ENCODE measurements at regions of chr11 and their contacts with region 1.

Region 1: DNA sequence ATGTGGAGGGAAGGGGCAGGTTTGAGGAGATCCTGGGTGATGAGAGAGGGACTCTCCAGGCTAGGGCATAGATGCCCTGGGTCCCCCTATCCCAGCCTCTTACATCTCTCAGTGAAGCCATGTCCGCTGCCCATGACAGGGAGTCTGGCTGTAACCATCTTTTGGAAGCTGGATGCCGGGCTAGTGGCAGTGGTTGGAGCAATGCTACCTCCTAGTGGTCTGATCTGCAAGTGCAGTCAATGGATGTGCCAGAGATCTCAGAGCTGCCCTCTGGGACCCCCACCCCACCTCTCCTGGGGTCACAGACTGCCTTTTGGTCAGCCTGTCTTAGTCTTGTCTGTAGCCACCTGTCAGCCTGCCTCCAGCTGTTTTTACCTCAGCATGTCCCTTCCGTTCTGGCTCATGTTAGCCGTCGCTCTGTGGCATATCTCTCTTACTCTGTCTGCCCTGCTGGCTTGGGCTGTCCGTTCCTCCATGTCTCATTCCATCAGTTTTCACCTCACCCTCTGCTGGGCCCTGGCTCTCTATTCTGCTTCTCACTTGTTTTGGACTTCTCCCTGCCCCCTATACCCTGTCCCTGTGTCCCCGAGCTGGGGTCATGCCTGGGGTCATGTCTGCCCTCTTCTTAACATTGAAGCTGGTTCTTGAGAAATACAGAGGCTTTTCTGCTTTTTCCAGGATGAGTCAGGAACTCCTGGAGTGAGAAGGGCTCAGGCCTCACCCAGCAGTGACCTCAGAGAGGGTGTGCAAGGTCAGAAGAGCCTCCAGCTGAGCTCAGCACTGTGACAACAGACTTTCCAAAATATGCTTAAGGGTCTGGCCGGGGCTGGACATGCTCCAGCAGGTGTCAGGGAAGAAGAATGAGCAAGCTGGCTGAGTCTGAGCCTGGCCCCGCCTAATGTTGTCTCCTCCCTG is 52.0 kb upstream of the THY1 start:
- DNase-seq: peak; percentile 72 to 94 (median 89)
- H3K4me3 ChIP-seq: no peak overlapping the region
- H3K27ac ChIP-seq: peak overlapping the region; percentile 42 to 88 (median 68)
- H3K4me1 ChIP-seq: peaks cover 5 to 8% of the 10 kb centered on the region in 2 donors
- H3K27me3 ChIP-seq: no peaks in the 10 kb centered on the region
- CTCF ChIP-seq: peak; percentile 89 to 97 (median 92)
- POLR2A ChIP-seq: no peak

Region 2: DNA sequence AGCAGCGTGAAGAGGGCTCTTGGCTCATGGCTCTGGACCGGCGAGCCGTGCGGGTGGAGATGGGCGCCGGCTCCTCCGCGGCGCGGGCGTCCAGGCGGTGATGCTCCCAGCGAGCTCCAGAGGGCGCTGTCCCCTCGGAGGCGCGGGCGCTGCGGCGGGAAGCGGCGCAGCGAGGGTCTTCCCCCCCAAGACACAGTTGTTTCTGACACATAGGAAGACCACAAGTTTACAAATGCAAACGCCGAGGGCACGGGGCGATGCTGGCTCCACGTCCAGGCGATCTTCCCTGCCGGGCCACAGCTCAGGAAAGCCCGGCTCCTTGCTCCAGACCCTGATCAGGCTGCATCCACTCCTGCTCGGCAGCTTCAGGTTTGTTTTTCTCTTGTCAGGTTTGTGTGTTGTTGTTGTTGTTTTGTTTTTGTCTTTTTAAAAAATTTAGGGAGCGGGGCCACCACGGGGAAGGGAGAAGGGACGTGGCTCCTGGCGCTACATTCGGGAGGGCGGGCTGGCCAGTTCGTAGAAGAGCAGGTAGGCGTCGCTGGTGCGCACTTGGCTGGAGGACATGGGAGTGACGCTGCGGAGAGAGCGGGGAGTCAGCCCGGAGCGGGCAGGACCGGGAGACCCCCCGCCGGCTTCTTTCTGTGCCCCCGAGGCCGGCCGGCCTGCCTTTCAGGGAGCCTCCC is 118.4 kb before region 1 on chr11:
- intact Hi-C with region 1: loop called (anchors 5 to 10 kb)
- DNase-seq: peak; percentile 77 to 91 (median 88)
- H3K4me3 ChIP-seq: peak overlapping the region in 2 of 4 donors; percentile 44 to 56
- H3K27ac ChIP-seq: peak overlapping the region in 3 of 5 donors; percentile 59 to 72 (median 70)
- H3K4me1 ChIP-seq: peaks cover 8 to 9% of the 10 kb centered on the region in 2 donors
- H3K27me3 ChIP-seq: no peaks in the 10 kb centered on the region
- CTCF ChIP-seq: peak; percentile 80 to 97 (median 95)
- POLR2A ChIP-seq: no peak

Region 3: DNA sequence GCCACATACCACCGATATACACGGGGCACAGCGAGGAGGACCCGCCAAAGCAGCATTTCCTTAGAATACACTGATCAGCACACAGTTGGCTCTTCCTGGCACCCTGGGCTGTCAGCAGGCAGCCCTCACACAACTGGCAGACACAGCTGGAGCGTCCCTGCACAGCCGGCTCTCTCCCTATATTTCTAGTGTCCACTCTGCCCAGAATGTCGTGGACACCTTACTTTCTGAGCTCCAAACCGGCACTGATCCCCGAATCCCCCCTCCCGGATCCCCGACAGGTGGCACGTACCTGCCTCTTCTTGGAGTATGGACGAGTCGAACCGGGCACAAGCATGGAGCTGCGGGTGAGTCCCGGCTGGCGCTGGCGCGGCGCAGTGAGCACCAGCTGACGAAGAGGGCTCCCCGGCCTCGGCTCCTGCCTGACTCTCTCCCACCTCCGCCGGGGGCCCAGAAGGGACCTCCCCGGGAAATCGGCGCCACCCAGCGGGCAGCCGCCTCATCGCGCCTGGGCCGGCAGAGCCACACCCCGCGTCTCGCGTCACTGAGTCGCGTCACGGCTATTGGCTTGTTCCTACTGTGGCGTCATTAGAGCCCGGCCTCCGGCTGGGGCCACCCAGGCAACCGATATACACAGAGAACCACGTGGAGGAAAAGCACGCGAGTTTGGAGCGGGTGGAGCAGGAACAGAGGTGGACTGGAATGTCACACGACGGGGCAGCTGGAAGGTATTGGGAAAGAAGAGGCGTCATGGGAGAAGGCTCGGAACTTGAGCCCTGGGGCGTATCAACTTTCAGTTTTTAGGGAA is 93.6 kb before region 1 on chr11 and contains the start of gene USP2:
- intact Hi-C with region 1: loop called in 1 of 2 experiments (anchors 10 kb)
- DNase-seq: peak; percentile 97 to 99 (median 97)
- H3K4me3 ChIP-seq: peak within 1 kb of the TSS in 2 of 4 donors; percentile 41 to 60
- H3K27ac ChIP-seq: peak within 1 kb of the TSS in 3 of 5 donors; percentile 24 to 71 (median 55)
- H3K4me1 ChIP-seq: peaks cover 9 to 18% of the 10 kb centered on the region in 2 donors
- H3K27me3 ChIP-seq: no peaks in the 10 kb centered on the region
- CTCF ChIP-seq: peak; percentile 83 to 97 (median 86)
- POLR2A ChIP-seq: peak in 1 of 2 donors; percentile 80
- total RNA-seq, gene USP2: 1.8 to 28.7 (median 9.6) TPM

Measured in adrenal gland (tissue), 19 donors.